GM10248 (cell line): ENCODE measurements at regions of chr5 and their contacts with region 1.

Region 1: GRCh38 chr5:147369742-147370374 is 135.0 kb downstream of the STK32A start:
- DNase-seq: no peak
- CTCF ChIP-seq: no peak

Region 2: GRCh38 chr5:147223948-147224791 is 145.7 kb before region 1 on chr5:
- CTCF ChIA-PET with region 1: interaction called, 10 read pairs
- POLR2A ChIA-PET with region 1: no interaction called
- DNase-seq: peak; percentile 26
- CTCF ChIP-seq: peak; percentile 8